ENCODE measurements at regions of chr12 and their contacts with region 1.

Region 1: DNA sequence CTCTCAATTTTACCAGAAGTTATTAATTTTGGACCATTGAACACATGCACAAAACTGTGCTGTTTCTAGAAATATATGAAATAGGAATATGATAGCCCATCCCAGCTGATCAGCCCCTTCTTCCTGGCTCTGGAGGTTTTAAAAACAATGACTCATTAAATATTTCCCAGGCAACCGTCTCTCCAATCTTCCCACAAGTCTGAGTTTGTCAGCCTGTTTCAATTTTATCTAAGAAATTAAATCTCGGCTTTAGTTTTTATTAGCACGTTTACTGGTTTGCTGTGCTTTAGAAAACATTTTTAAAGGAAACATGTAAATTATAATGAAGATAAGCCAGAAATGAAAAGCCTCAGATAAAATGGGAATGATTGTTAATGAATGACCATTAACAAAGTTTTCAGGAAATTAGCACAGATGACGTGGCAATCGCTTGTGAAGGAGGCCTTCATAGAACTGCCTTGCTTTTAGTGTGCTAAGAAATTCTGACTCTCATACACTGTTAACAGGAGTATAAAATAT is 89.3 kb upstream of the RAP1B start:
- DNase-seq: no peak
- ATAC-seq: peak; percentile 87
- H3K4me3 ChIP-seq: peak overlapping the region in 1 of 2 experiments; percentile 4; a peak in 2 of 4 replicates
- H3K27ac ChIP-seq: peak overlapping the region; percentile 97
- H3K4me1 ChIP-seq: peaks cover 34% of the 10 kb centered on the region
- H3K27me3 ChIP-seq: no peaks in the 10 kb centered on the region
- CTCF ChIP-seq: no peak

Region 2: GRCh38 chr12:68497702-68498101 is 23.7 kb before region 1 on chr12:
- CTCF ChIA-PET with region 1: no interaction called
- POLR2A ChIA-PET with region 1: interaction called, 13 read pairs
- in situ Hi-C with region 1: no loop called
- intact Hi-C with region 1: no loop called
- DNase-seq: no peak
- ATAC-seq: peak; percentile 89
- H3K4me3 ChIP-seq: no peak overlapping the region
- H3K27ac ChIP-seq: peak overlapping the region; percentile 79
- H3K4me1 ChIP-seq: 0 out of 2 replicates have a peak, but pooled peaks cover 6% of the 10 kb centered on the region
- H3K27me3 ChIP-seq: no peaks in the 10 kb centered on the region
- CTCF ChIP-seq: no peak

Measured in Panc1 (cell line).